HepG2 (cell line): ENCODE measurements at regions of chr19 and their contacts with region 1.

Region 1: DNA sequence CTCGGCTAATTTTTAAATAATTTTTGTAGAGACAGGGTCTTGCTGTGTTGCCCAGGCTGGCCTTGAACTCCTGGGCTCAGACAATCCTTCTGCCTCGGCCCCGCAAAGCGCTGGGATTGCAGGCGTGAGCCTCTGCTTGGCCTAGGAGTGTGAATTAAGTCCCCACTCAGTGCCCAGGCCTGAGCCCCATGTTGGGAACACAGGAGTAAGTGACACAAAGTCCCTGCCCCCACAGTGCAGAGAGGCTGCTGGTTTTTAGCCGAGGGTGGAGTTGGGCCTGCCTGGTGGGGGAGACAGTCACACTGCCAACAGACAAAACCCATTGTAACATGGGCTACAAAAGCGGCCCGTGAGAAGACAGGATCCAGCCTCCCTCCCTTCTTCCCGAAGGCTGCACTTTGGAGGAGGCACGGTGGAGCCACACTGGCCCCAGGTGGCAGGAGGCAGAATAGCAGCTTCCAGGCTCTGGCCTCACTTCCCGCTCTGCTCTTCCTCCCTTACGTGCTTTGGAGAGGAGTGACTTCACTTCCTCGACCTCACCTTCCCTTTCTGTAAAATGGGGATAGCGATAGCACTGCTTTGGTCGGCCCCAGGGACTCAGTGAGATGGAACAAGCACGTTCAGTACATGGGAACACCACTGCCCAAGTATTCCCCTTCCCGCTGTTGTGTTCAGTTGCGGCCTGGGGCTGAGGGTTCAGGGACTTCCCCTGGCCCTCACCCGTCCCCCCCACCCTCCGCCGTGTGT is 15.2 kb upstream of the EHD2 start:
- DNase-seq: peak; percentile 67
- ATAC-seq: peak; percentile 78
- H3K4me3 ChIP-seq: no peak overlapping the region
- H3K27ac ChIP-seq: no peak overlapping the region
- H3K4me1 ChIP-seq: peaks cover 4% of the 10 kb centered on the region; the same call in 1 of the 2 replicates
- H3K27me3 ChIP-seq: no peaks in the 10 kb centered on the region
- CTCF ChIP-seq: peak; percentile 99
- EP300 ChIP-seq: no peak
- POLR2A ChIP-seq: no peak
- RAD21 ChIP-seq: peak; percentile 97

Region 2: GRCh38 chr19:47436712-47437401 is 261.2 kb before region 1 on chr19:
- CTCF ChIA-PET with region 1: interaction called, 28 read pairs
- POLR2A ChIA-PET with region 1: no interaction called
- in situ Hi-C with region 1: loop called (anchors 5 kb)
- intact Hi-C with region 1: loop called (anchors 1 kb)
- DNase-seq: peak; percentile 50
- ATAC-seq: peak; percentile 92
- H3K4me3 ChIP-seq: no peak overlapping the region
- H3K27ac ChIP-seq: no peak overlapping the region
- H3K4me1 ChIP-seq: no peaks in the 10 kb centered on the region
- H3K27me3 ChIP-seq: peaks cover 0 to 8% of the 10 kb centered on the region in 2 experiments; a peak in 2 of 5 replicates
- CTCF ChIP-seq: peak; percentile 96
- EP300 ChIP-seq: no peak
- POLR2A ChIP-seq: no peak
- RAD21 ChIP-seq: peak; percentile 83

Region 3: GRCh38 chr19:47514869-47515588 is 183.0 kb before region 1 on chr19 and contains the start of gene NAPA:
- CTCF ChIA-PET with region 1: no interaction called
- POLR2A ChIA-PET with region 1: no interaction called
- in situ Hi-C with region 1: loop called (anchors 5 kb)
- intact Hi-C with region 1: loop called (anchors 2 kb)
- DNase-seq: peak; percentile 99
- ATAC-seq: peak; percentile 87
- H3K4me3 ChIP-seq: peak within 1 kb of the TSS; percentile 93 to 99 (median 98)
- H3K27ac ChIP-seq: peak within 1 kb of the TSS; percentile 87
- H3K4me1 ChIP-seq: peaks cover 40% of the 10 kb centered on the region
- H3K27me3 ChIP-seq: no peaks in the 10 kb centered on the region; a peak in 1 of 5 replicates
- CTCF ChIP-seq: no peak
- EP300 ChIP-seq: peak in 1 of 2 experiments; percentile 43; a peak in 2 of 4 replicates
- POLR2A ChIP-seq: peak; percentile 57 to 89
- RAD21 ChIP-seq: peak; percentile 69
- total RNA-seq, gene NAPA: 32.6 and 36.5 TPM in 2 replicates

Region 4: DNA sequence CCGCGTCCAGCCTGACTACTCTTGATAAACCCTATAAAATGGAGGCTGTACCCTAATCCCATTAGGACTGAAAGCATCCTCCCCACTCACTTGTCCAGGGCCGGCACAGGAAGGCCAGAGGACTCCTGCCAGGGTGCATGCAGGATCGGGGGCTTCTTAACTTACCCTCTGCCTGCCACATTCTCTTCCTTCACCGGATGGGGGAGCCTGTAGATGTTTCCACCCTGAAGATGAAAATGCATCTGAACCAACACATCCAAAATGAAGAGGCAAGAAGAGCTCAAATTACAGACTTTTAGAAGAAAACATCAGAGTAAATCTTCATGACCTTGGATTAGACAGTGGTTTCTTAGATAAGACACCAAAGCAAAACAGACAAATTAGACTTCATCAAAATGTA is 157.3 kb before region 1 on chr19:
- CTCF ChIA-PET with region 1: interaction called, 8 read pairs
- POLR2A ChIA-PET with region 1: no interaction called
- in situ Hi-C with region 1: loop called (anchors 5 kb)
- intact Hi-C with region 1: loop called (anchors 2 kb)
- DNase-seq: peak; percentile 31
- ATAC-seq: 0 out of 3 replicates have a peak, but pooled peaks have one; percentile 35
- H3K4me3 ChIP-seq: no peak overlapping the region
- H3K27ac ChIP-seq: no peak overlapping the region
- H3K4me1 ChIP-seq: no peaks in the 10 kb centered on the region
- H3K27me3 ChIP-seq: peaks cover 6 to 30% of the 10 kb centered on the region in 2 experiments; a peak in 4 of 5 replicates
- CTCF ChIP-seq: peak; percentile 45
- EP300 ChIP-seq: no peak
- POLR2A ChIP-seq: no peak
- RAD21 ChIP-seq: no peak

Region 5: DNA sequence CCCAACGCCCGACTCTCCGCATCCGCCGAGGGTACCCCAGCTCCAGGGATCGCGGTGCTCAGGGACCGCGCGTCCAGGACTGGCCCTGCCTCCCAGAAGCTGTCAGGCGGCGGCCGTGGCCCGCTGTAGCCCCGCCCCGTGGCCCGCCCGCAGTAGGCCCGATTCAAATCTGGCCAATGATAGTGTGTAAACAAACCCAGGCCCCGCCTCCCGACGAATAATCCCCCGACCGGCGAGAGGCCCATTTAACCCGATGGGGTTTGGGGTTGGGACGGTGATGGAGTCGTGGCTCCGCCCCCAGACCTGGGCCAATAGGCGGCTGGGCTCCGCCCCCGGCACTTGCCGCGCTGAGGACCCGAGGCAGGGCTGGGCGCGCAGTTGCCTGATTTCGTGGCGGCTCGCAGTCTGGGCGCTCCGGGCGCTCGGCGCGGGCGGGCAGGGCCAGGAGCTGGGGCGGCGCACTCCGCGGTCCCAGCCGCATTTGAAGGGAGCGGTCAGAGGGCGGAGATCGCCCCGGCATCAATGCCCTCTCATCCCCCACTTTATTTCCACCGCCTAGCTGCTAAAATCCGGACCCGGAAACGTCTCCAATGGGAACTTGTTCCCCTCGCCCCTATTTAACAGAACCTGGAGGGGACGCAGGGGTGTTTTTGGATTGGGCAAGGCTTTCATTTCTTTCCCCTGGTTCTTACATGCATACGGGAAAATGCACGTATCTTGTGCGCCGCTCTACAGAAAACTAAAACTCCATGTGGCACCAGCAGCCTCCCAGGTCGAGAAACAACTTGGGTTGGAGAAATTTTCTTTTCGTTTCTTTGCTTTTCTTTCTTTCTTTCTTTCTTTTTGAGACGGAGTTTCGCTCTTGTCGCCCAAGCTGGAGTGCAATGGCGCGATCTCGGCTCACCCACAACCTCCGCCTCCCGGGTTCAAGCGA is 97.5 kb before region 1 on chr19:
- CTCF ChIA-PET with region 1: no interaction called
- POLR2A ChIA-PET with region 1: no interaction called
- in situ Hi-C with region 1: loop called (anchors 10 kb)
- intact Hi-C with region 1: no loop called
- DNase-seq: peak; percentile 97
- ATAC-seq: peak; percentile 92
- H3K4me3 ChIP-seq: peak overlapping the region; percentile 65 to 77 (median 68)
- H3K27ac ChIP-seq: peak overlapping the region; percentile 75
- H3K4me1 ChIP-seq: peaks cover 40% of the 10 kb centered on the region
- H3K27me3 ChIP-seq: 0 out of 5 replicates have a peak, but pooled peaks cover 1 to 12% of the 10 kb centered on the region in 2 experiments
- CTCF ChIP-seq: no peak; the same call in 1 of the 2 replicates
- EP300 ChIP-seq: no peak
- POLR2A ChIP-seq: peak; percentile 71 to 82
- RAD21 ChIP-seq: 0 out of 2 replicates have a peak, but pooled peaks have one; percentile 38

Region 6: DNA sequence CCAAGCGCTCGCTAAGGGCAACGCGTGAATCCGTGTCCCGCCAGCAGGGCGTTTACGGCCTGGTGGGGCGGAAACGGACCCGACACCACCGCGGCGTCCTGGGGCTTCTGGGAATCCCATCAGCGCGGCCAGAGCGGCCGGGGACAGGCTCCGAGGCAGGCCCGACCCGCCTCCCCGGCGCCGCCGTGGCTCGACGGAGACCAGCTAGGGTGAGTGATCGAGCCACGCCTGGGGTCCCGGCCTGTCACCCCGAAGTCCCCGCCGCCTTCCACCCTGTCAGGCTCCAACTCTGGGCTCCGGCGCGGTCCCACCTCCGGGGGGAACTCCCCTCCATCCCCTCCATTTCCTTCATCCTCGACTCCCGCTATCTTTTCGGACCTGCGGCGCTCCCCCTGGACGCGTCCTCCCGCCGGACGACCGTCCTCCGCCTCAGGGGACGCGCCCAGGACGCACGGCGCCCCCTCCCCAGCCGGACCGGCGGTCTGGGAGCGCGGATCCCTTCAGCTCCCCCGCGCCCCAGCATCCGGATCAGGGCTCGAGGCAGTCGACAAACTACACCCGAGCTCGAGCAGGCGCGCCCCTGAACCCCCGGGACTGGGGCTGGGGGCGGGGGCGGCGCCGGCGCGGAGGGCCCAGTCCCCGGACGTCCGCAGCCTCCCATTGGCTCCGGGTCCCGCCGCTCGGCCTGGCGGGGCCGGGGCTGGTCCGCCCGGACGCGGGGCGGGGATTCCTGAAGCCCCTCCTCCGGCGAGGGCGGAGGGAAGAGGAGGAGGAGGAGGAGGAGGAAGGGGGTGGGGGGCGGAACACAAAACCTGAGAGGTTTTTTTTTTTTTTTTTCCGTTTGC is 89.7 kb before region 1 on chr19:
- CTCF ChIA-PET with region 1: no interaction called
- POLR2A ChIA-PET with region 1: no interaction called
- in situ Hi-C with region 1: loop called (anchors 10 kb)
- intact Hi-C with region 1: loop called (anchors 1 kb)
- DNase-seq: peak; percentile 82
- ATAC-seq: peak; percentile 91
- H3K4me3 ChIP-seq: peak overlapping the region; percentile 90 to 97 (median 94)
- H3K27ac ChIP-seq: peak overlapping the region; percentile 89
- H3K4me1 ChIP-seq: peaks cover 24% of the 10 kb centered on the region
- H3K27me3 ChIP-seq: no peaks in the 10 kb centered on the region; a peak in 2 of 5 replicates
- CTCF ChIP-seq: no peak; the same call in none of the 2 replicates
- EP300 ChIP-seq: no peak
- POLR2A ChIP-seq: peak; percentile 61 to 78; a peak in 3 of 4 replicates
- RAD21 ChIP-seq: 0 out of 2 replicates have a peak, but pooled peaks have one; percentile 50

Region 7: DNA sequence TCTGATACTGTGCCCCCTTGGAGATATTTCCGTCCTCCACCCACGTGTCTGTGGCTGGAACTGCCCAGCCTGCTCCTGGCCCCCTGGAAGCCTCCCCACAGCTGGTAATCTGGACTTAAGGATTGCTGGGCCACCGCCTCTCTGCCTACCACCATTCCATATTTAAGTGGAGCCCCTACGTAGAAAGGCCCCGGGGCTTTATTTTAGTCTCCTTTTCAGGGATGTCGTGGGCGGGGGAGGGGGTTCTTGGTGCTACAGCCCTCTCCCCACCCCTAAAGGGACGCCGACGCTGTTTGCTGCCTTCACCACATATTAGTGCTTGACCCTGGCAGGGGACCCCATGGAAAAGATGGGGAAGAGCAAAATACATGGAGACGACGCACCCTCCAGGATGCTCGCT is 44.6 kb after region 1 on chr19:
- CTCF ChIA-PET with region 1: interaction called, 11 read pairs
- POLR2A ChIA-PET with region 1: interaction called, 3 read pairs
- in situ Hi-C with region 1: loop called (anchors 5 kb)
- intact Hi-C with region 1: loop called (anchors 1 kb)
- DNase-seq: no peak
- ATAC-seq: no peak
- H3K4me3 ChIP-seq: peak overlapping the region in 1 of 3 experiments; percentile 74; a peak in 2 of 6 replicates
- H3K27ac ChIP-seq: no peak overlapping the region
- H3K4me1 ChIP-seq: peaks cover 43% of the 10 kb centered on the region
- H3K27me3 ChIP-seq: no peaks in the 10 kb centered on the region
- CTCF ChIP-seq: no peak
- EP300 ChIP-seq: no peak
- POLR2A ChIP-seq: no peak
- RAD21 ChIP-seq: no peak

Region 8: DNA sequence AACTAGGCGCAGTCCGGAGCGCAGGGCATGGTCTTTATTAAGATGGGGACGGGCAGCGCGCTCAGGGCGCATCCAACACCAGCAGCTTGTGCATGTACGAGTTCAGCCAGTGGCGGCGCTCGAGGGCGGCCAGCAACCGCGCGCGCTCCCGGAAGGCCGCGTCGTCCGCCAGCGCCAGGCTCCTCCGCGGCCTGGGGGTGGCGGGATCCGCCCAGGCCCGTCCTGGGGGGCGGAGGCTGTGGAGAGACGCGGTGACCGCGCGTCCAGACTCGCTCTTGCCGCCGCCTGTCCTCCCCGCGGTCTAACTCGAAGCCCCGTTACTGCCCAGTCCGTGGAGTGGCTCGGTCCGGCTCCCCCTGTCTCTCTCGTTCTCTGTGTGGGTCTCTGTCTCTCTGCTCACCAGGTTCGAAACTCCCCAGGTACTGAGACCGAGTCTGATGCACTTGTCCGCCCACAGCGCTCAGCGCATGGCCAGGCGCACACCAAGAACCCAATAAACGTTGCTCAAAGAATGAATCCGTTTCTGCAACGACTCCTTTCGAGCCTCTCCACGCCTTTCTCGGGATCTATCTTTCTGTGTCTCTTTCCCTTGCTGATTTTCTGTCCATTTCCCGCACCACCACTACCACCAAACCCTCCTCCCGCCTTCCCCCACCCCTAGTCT is 1724.5 kb after region 1 on chr19:
- CTCF ChIA-PET with region 1: no interaction called
- POLR2A ChIA-PET with region 1: no interaction called
- in situ Hi-C with region 1: no loop called
- intact Hi-C with region 1: no loop called
- DNase-seq: no peak
- ATAC-seq: peak; percentile 43
- H3K4me3 ChIP-seq: peak overlapping the region in 1 of 3 experiments; percentile 26; a peak in 1 of 6 replicates
- H3K27ac ChIP-seq: no peak overlapping the region
- H3K4me1 ChIP-seq: 0 out of 2 replicates have a peak, but pooled peaks cover 6% of the 10 kb centered on the region
- H3K27me3 ChIP-seq: peaks cover 16 to 87% of the 10 kb centered on the region in 2 experiments
- CTCF ChIP-seq: peak; percentile 41
- EP300 ChIP-seq: no peak
- POLR2A ChIP-seq: no peak
- RAD21 ChIP-seq: no peak